Activated naive CD4-positive, alpha-beta T cell treated with anti-CD3 and anti-CD28 coated beads, Interleukin-2, amount 10 ng/mL, durations not matched to agents 7 days and 5 days (primary cell): ENCODE measurements at regions of chr7 and their contacts with region 1.

Region 1: GRCh38 chr7:101553018-101553770 is 75.9 kb downstream of the MYL10 start:
- DNase-seq: peak; percentile 6
- H3K4me3 Mint-ChIP-seq: no peak overlapping the region
- H3K27ac Mint-ChIP-seq: no peak overlapping the region
- H3K4me1 Mint-ChIP-seq: no peaks in the 10 kb centered on the region
- H3K27me3 Mint-ChIP-seq: peaks cover 4% of the 10 kb centered on the region

Region 2: DNA sequence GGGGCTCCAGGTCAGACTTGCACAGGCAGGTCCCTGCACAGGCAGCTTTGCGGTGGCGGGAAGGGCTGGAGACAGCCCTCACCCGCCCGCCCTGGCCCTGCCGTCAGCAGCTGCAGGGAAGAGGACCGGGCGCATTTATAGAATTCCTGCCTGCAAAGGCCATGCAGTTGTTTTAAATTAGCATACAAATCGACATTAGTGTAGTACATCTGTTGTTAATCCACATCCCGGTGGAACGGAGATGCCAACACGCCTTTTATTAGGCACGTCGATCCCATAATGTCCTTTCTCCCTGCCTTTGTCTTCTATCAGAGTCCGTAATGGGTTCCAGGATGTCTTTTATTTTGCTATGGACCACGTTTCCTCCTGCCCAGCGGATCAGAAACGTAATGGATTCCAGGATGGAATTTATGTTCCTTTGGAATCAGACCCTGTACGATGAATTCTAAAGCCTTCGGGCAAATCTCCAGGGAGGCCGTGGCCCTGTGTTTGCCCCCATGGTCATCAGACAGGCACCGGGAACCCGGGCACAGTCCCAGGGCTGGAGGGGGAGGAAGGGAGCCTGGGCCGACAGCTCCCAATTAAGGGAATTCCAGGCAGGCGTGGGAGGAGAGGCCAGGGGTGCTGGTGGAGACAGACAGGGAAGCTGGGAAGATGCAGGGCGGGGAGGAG is 66.6 kb before region 1 on chr7:
- CTCF ChIA-PET with region 1: no interaction called
- DNase-seq: no peak
- H3K4me3 Mint-ChIP-seq: no peak overlapping the region
- H3K27ac Mint-ChIP-seq: no peak overlapping the region
- H3K4me1 Mint-ChIP-seq: no peaks in the 10 kb centered on the region
- H3K27me3 Mint-ChIP-seq: peaks cover 16% of the 10 kb centered on the region

Region 3: DNA sequence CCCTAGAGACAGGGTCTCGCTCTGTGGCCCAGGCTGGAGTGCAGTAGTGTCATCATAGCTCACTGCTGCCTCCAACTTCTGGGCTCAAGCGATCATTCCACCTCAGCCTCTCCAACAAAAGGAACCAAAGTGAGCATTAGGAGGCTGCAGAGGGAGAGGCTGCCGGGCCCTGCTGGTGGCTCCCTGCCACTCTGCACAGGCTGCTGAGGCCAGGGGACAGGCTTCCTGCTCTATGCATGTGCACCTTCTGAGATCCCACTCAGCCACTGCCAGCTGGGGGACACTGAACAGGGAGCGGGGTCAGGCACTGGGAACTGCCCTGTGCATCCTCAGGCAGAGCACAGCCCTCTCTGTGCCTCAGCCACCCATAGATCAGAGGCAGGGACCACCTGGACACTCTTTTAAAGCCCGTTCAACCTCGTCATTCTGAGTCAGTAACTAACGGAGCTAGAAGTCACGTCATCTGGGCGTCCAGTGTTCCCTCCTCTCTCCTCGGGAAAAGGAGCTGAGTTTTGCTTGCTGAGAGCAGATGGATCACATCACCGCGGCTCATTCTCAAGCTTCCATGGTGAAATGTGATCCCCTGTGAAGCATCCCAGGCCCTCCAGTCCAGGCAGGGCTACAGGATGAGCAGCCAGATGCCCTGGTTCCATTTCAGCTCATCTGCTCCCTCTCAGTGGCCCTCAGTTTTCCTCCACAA is 33.7 kb before region 1 on chr7:
- CTCF ChIA-PET with region 1: no interaction called
- DNase-seq: no peak
- H3K4me3 Mint-ChIP-seq: no peak overlapping the region
- H3K27ac Mint-ChIP-seq: no peak overlapping the region
- H3K4me1 Mint-ChIP-seq: no peaks in the 10 kb centered on the region
- H3K27me3 Mint-ChIP-seq: peaks cover 16% of the 10 kb centered on the region

Region 4: DNA sequence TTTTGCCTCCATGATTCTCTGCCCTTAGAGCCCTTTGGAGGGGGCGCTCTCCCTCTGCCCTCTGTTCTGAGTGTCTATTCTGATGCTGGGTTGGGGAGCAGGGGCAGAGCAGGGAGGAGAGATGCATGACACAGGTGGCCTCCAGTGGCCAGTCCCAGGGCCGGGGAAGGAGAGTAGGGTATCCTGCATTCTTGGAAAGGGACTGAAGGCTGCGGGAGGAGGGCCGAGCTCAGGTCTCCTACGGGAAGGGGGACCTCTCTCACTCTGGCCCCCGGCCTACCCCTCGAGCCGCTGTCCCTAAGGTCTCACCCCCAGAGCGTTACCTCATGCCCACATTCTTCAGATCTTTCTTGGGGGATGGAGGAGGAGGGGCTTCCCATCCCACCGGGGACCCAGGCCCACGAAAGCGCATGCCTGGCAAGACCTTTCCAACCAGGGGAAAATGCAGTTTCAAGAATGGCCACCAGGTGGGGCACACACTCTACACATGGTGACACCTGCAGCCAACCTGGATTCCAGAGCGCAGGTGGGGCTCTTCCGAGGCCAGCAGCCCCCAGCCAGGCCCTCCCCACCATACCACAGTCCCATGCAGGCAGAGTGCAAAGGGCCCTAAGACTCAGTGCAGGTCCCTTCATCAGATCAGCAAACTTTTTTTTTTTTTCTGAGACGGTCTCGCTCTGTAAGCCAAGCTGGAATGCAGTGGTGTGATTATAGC is 10.5 kb before region 1 on chr7:
- CTCF ChIA-PET with region 1: interaction called, 10 read pairs
- DNase-seq: peak; percentile 84
- H3K4me3 Mint-ChIP-seq: no peak overlapping the region
- H3K27ac Mint-ChIP-seq: no peak overlapping the region
- H3K4me1 Mint-ChIP-seq: no peaks in the 10 kb centered on the region
- H3K27me3 Mint-ChIP-seq: peaks cover 8% of the 10 kb centered on the region

Region 5: GRCh38 chr7:101588131-101588935 is 35.1 kb after region 1 on chr7:
- CTCF ChIA-PET with region 1: no interaction called
- DNase-seq: no peak
- H3K4me3 Mint-ChIP-seq: no peak overlapping the region
- H3K27ac Mint-ChIP-seq: no peak overlapping the region
- H3K4me1 Mint-ChIP-seq: no peaks in the 10 kb centered on the region
- H3K27me3 Mint-ChIP-seq: peaks cover 5% of the 10 kb centered on the region